Vagina (tissue), 2 donors: ENCODE measurements at regions of chr18 and their contacts with region 1.

Region 1: DNA sequence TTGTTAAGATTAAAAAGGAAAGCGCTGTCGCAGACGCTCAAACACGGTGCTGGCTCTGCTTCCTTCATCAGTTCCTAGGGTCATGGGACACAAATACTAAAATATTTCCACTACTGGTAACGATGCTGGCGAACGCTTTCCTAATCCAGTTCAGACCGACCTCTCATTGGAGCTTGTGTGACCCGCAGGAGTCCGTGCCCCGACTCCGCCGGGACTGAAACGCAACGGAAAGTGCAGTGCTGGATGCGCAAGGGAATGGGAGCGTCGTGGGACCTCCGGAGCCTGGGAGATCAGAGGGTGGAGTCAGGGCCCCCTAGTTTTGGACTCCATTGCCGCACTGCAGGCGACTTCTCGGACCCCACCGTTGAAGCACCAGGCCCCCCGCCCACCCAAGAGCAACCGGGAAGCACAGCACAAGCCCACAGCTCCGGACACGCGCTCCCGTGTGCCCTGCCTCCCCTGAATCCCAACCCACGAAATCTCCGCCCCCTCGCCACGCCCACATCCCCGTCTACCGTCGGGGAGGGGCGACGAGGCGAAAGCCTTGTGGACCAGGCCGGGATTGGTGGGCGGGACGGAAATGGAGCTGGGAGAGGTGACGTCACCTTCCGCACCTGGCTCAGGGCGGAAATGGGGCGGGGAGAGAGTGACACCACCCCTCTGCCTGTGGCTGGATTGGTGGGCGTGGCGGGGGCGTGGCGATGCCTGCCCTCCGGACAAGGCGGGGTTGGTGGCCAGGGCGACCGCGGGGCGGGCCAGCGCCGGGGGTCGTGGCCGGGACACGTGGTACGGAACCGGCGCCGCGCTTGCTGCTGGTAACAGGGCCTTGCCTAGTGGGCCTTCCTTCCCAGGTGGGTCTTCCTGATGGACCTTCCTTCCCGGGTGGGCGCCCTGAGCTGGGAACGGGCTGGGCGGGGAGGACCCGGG is at the start of gene CNDP2:
- DNase-seq: peak; percentile 99 to 100
- H3K4me3 ChIP-seq: peak within 1 kb of the TSS; percentile 84 to 99
- H3K27ac ChIP-seq: peak within 1 kb of the TSS; percentile 93
- H3K4me1 ChIP-seq: peaks cover 32% of the 10 kb centered on the region
- H3K27me3 ChIP-seq: no peaks in the 10 kb centered on the region
- CTCF ChIP-seq: peak in 1 of 3 experiments; percentile 7
- POLR2A ChIP-seq: peak in 1 of 2 donors; percentile 91
- total RNA-seq, gene CNDP2: 52.5 TPM

Region 2: GRCh38 chr18:74597662-74598349 is 102.0 kb after region 1 on chr18 and contains the start of gene ZNF407:
- intact Hi-C with region 1: loop called (anchors 5 kb)
- DNase-seq: peak in 1 of 2 donors; percentile 95
- H3K4me3 ChIP-seq: peak within 1 kb of the TSS; percentile 89 to 95
- H3K27ac ChIP-seq: peak within 1 kb of the TSS; percentile 93
- H3K4me1 ChIP-seq: peaks cover 37% of the 10 kb centered on the region
- H3K27me3 ChIP-seq: no peaks in the 10 kb centered on the region
- CTCF ChIP-seq: no peak
- POLR2A ChIP-seq: no peak
- total RNA-seq, gene ZNF407: 15.5 TPM